A549 (cell line): ENCODE measurements at regions of chr4 and their contacts with region 1.

Region 1: DNA sequence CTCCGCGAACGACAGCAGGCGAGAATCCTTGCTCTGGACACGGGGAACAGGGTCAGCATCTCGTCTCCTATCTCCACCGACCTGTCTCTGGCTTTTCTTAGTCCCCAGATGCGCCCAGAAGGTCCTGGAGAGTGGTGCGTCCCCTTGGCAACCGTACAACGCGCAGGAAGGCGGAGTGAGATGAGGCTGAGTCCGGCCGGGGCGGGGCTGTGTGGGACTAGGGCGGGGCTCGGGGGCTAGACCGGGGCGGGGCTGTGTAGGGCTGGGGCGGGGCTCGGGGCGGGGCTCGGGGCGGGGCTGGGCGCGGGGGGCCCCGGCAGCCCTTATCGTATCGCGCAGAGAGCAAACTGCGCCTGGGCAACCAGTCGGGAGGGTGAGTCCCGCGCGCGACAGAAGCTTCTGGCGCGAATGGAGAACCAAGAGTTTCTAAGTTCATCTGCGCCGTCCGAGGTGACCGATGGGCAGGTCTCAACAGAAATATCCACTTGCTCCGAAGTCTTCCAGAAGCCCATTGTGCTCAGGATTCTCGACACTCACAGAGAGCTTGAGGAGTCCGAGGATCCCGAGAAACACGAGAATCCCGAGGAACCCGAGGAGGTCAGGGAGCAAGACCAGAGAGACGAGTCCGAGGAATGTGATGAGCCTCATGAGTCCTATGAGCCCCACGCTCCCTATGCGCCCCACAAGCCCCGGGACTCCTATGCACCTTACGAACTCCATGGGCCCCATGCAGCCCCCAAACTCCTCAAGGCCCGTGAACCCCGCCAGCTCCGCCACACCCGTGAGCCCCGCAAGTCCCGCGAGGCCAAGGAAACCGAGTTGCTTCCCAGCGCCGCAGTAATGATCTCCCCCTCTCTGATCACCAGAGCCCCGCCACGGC is 24.9 kb downstream of the ARL9 start:
- DNase-seq: peak; percentile 38 to 66
- ATAC-seq: peak; percentile 93 to 97
- H3K4me3 ChIP-seq: peak overlapping the region; percentile 59
- H3K27ac ChIP-seq: peak overlapping the region; percentile 44 to 80; a peak in 5 of 6 replicates
- H3K4me1 ChIP-seq: no peaks in the 10 kb centered on the region
- CTCF ChIP-seq: no peak
- EP300 ChIP-seq: no peak
- POLR2A ChIP-seq: peak; percentile 44
- RAD21 ChIP-seq: no peak

Region 2: GRCh38 chr4:56544573-56545131 is 14.1 kb after region 1 on chr4:
- CTCF ChIA-PET with region 1: interaction called, 12 read pairs
- POLR2A ChIA-PET with region 1: no interaction called
- DNase-seq: peak; percentile 46 to 75
- ATAC-seq: peak; percentile 100
- H3K4me3 ChIP-seq: peak overlapping the region; percentile 39
- H3K27ac ChIP-seq: peak overlapping the region; percentile 35 to 56; a peak in 3 of 6 replicates
- H3K4me1 ChIP-seq: no peaks in the 10 kb centered on the region
- CTCF ChIP-seq: peak; percentile 90
- EP300 ChIP-seq: no peak
- POLR2A ChIP-seq: no peak
- RAD21 ChIP-seq: peak; percentile 71 to 78